ENCODE measurements at regions of chr2 and their contacts with region 1.

Region 1: DNA sequence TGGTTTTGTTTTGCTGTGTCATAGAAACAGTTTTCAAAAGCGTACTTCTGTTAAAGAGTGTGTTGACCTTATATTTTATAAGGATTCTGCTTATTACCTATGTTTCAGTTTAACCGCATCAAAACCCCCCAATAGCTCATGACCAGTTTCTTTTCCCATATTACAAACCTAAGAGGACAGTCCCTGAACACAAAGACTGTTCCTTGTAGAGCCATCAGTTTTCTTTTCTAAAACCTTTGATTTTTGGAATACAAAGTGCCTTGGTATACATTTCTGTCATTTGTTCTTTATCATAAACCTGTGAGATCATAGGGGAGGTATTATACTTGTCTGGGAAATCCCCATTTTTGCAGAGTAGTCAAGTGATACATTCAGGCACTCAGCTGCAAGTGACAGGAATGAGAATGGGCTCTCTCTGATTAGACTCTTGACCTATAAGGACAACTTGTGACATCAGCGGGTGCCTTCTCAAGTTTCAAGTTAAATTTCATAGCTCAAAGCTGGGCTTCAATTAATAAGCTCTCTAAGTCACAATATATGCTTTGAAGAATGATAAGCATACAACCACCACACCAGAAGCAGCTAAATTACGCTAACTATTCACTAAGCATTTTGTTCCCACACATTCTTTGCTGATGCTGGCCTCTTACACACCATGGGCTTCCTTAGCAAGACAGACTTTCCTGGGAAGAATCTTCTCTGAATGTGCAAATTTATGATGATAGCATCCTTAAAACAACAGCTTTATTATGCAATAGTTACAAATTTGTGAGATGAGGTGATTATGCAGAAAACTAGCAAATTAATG is 97.5 kb upstream of the CD302 start:
- DNase-seq: no peak
- H3K4me3 Mint-ChIP-seq: no peak overlapping the region
- H3K27ac Mint-ChIP-seq: peak overlapping the region; percentile 78
- H3K4me1 Mint-ChIP-seq: peaks cover 33% of the 10 kb centered on the region
- H3K27me3 Mint-ChIP-seq: no peaks in the 10 kb centered on the region

Region 2: DNA sequence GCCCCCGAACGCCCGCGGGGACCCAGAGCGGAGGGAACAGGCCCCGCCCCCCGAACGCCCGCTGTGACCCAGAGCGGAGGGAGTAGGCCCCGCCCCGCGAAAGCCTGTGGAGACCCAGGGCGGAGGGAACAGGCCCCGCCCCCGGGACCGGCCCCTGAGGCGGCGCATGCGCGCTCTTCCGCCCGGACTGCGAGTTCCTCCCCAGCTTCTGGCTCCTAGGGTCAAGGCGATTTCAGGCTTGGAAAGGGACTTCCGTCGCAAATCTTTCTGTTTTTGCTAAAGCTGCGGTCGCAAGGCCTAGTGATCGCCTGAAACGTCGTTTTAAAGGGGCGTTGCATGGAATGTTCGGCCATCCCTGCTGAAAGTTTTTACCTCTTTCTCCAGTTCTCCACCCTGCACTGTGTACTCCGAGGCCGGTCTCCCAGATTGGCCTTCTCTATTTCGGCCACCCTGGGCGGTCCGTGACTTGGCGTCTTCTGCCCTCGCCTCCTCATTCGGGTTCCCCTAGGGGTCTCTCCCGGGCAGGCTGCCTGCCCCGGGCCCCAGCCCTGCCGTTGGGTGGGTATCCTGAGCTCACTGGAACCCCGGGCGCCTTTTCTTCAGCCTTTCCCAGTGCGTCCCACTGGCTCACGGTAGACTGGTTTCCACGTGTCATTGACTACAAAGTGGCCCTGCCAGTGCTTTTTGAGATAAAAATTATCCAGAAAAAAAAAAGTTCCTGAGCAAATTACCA is 608.6 kb before region 1 on chr2:
- intact Hi-C with region 1: loop called (anchors 10 kb)
- DNase-seq: peak; percentile 99
- H3K4me3 Mint-ChIP-seq: peak overlapping the region; percentile 87
- H3K27ac Mint-ChIP-seq: peak overlapping the region; percentile 85
- H3K4me1 Mint-ChIP-seq: peaks cover 18% of the 10 kb centered on the region
- H3K27me3 Mint-ChIP-seq: no peaks in the 10 kb centered on the region

Region 3: DNA sequence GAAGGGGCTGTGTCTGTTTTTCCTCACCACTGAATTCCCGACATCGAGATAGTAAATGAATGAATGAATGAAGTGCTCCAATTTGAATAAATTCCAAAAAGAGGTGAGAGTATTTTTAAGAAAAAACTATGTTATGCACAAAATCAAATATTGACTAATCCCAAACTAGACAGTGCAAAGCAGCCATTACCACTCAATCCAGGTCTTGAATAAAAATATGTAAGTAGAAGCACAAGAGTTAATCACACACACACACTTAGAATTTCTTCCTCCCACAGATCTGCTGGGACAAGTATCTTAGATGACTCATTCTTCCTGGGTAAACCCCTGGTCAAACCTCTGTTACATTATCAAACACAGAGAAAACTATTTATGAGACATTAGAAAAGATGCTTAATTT is 64.9 kb after region 1 on chr2:
- intact Hi-C with region 1: no loop called
- DNase-seq: no peak
- H3K4me3 Mint-ChIP-seq: no peak overlapping the region
- H3K27ac Mint-ChIP-seq: no peak overlapping the region
- H3K4me1 Mint-ChIP-seq: peaks cover 10% of the 10 kb centered on the region
- H3K27me3 Mint-ChIP-seq: no peaks in the 10 kb centered on the region

Region 4: DNA sequence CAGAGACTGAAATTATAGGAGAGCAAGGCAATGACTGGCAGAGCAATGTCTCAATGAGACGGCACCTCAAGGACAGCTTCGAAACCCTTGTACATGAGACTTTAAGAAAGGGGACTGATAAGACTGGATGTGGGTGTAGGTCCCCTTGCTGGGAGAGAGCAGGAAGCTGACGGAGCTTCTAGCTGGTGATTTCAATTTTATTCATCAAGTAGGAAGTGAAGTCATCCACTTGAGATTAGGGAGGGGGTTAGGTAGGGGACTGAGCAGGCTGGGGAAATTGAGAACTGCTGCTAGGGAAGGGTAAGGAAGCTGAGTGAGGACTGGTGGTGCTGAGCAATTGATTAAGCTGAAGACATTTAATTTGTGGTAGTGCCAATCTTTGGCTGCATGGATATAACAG is 404.1 kb after region 1 on chr2:
- intact Hi-C with region 1: loop called (anchors 5 kb)
- DNase-seq: no peak
- H3K4me3 Mint-ChIP-seq: no peak overlapping the region
- H3K27ac Mint-ChIP-seq: peak overlapping the region; percentile 45
- H3K4me1 Mint-ChIP-seq: peaks cover 58% of the 10 kb centered on the region
- H3K27me3 Mint-ChIP-seq: no peaks in the 10 kb centered on the region